ENCODE measurements at regions of chr18 and their contacts with region 1.

Region 1: GRCh38 chr18:9474983-9475642 is at the start of gene RALBP1:
- DNase-seq: peak; percentile 97 to 100
- H3K4me3 ChIP-seq: peak within 1 kb of the TSS; percentile 95 to 98
- H3K27ac ChIP-seq: peak within 1 kb of the TSS; percentile 88 to 90
- H3K4me1 ChIP-seq: peaks cover 0 to 5% of the 10 kb centered on the region in 2 donors
- H3K27me3 ChIP-seq: no peaks in the 10 kb centered on the region
- CTCF ChIP-seq: peak in 1 of 3 experiments; percentile 35
- total RNA-seq, gene RALBP1: 67.2 TPM

Region 2: GRCh38 chr18:9066817-9067306 is 408.3 kb before region 1 on chr18:
- intact Hi-C with region 1: loop called (anchors 2 kb)
- DNase-seq: no peak
- H3K4me3 ChIP-seq: no peak overlapping the region
- H3K27ac ChIP-seq: no peak overlapping the region
- H3K4me1 ChIP-seq: no peaks in the 10 kb centered on the region
- H3K27me3 ChIP-seq: no peaks in the 10 kb centered on the region
- CTCF ChIP-seq: no peak

Region 3: DNA sequence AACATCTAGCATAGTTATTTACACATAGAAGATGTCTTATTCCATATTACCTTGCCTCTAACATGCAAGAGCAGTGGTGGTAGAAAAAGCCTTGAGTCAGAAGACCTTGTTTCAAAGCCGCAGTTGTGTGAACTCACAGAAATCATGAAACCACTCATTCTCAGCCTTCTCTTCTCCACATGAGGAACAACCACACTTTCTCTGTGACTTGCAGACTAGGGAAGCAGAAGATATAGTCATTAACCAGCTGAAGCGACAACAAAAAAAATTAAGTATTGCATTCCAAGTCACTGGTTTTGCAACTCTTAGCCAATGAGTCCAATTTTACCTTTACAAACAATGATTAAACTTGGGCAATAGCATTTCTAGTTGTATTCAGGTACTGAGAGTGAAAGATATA is 121.5 kb before region 1 on chr18:
- intact Hi-C with region 1: loop called (anchors 5 kb)
- DNase-seq: no peak
- H3K4me3 ChIP-seq: no peak overlapping the region
- H3K27ac ChIP-seq: peak overlapping the region; percentile 70 to 79
- H3K4me1 ChIP-seq: peaks cover 0 to 33% of the 10 kb centered on the region in 2 donors
- H3K27me3 ChIP-seq: no peaks in the 10 kb centered on the region
- CTCF ChIP-seq: no peak

Region 4: GRCh38 chr18:9516437-9517064 is 41.4 kb after region 1 on chr18:
- intact Hi-C with region 1: loop called (anchors 2 kb)
- DNase-seq: no peak
- H3K4me3 ChIP-seq: no peak overlapping the region
- H3K27ac ChIP-seq: peak overlapping the region; percentile 17 to 62
- H3K4me1 ChIP-seq: peaks cover 0 to 9% of the 10 kb centered on the region in 2 donors
- H3K27me3 ChIP-seq: no peaks in the 10 kb centered on the region
- CTCF ChIP-seq: peak; percentile 52 to 76 (median 74)